PC-9 (cell line): ENCODE measurements at regions of chr18 and their contacts with region 1.

Region 1: DNA sequence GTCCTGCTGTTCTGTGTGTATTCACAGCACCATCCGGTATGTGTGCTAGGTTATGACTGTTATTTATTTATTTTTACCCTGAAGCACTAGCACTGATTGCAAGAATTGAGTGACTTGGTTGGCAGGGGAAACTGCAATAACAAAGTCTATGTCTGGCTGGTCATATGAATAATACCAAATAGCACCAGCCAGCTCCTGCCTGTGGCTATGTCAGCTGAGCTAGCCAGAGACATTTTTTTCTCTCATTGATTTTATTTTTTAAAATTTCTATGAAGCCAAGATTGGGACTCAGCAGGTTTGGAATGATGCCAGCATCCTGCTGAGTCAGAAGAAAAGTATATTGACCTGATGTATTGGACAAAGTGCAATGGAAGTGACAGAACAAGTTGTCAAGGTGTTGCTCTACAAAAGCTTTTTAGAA is 188.5 kb upstream of the CDH2 start:
- DNase-seq: peak; percentile 41 to 50
- H3K4me3 ChIP-seq: no peak overlapping the region
- H3K27ac ChIP-seq: no peak overlapping the region
- H3K4me1 ChIP-seq: no peaks in the 10 kb centered on the region
- H3K27me3 ChIP-seq: no peaks in the 10 kb centered on the region
- CTCF ChIP-seq: no peak

Region 2: DNA sequence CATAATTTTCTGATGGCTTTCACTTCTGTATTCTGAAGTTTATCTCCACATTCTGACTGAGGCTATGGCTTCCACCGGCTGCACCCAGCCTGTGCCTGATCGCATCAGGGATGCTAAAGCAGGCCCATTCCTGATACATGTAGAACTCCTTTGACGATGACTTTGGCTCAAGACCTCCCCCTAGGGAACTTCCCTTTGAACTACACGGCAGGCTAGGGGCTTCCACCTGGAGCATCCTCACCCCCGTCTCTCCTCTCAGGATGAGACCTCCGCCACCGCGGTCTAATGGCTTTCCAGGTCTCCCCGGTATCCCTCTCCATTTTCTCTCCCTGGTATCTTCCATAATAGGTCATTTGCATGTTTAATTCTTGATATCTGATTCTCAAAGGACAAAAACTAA is 965.4 kb before region 1 on chr18:
- CTCF ChIA-PET with region 1: no interaction called
- POLR2A ChIA-PET with region 1: no interaction called
- intact Hi-C with region 1: loop called (anchors 10 kb)
- DNase-seq: no peak
- H3K4me3 ChIP-seq: no peak overlapping the region
- H3K27ac ChIP-seq: no peak overlapping the region
- H3K4me1 ChIP-seq: 0 out of 2 replicates have a peak, but pooled peaks cover 5% of the 10 kb centered on the region
- H3K27me3 ChIP-seq: no peaks in the 10 kb centered on the region
- CTCF ChIP-seq: no peak

Region 3: DNA sequence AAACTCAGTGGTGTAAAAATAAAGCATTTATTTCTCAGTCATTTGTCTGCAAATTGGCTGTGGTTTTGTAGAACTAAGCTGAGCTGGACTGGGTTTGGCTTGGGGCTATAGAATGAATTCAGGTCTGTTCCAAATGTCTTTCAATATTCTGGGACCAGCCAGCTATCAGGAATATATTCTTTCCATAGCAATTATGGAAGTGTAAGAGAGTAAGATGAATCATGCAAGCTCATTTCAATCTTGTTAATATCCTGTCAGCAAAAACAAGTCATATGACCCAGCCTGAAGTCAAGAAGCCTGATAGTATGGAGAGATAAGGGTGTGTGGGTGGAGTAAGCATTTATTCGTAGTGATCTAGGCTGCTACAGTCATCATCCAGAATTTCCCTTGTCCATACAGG is 292.5 kb after region 1 on chr18:
- CTCF ChIA-PET with region 1: no interaction called
- POLR2A ChIA-PET with region 1: no interaction called
- intact Hi-C with region 1: no loop called
- DNase-seq: no peak
- H3K4me3 ChIP-seq: no peak overlapping the region
- H3K27ac ChIP-seq: no peak overlapping the region
- H3K4me1 ChIP-seq: no peaks in the 10 kb centered on the region
- H3K27me3 ChIP-seq: no peaks in the 10 kb centered on the region
- CTCF ChIP-seq: no peak